GM10248 (cell line): ENCODE measurements at regions of chr14 and their contacts with region 1.

Region 1: GRCh38 chr14:22556990-22557623 is 31.9 kb downstream of the DAD1 start:
- DNase-seq: peak; percentile 77
- CTCF ChIP-seq: peak; percentile 92

Region 2: GRCh38 chr14:22478670-22479069 is 78.4 kb before region 1 on chr14:
- CTCF ChIA-PET with region 1: interaction called, 22 read pairs
- POLR2A ChIA-PET with region 1: interaction called, 4 read pairs
- DNase-seq: no peak
- CTCF ChIP-seq: no peak

Region 3: GRCh38 chr14:22512106-22512814 is 44.8 kb before region 1 on chr14:
- CTCF ChIA-PET with region 1: interaction called, 22 read pairs
- POLR2A ChIA-PET with region 1: interaction called, 3 read pairs
- DNase-seq: no peak
- CTCF ChIP-seq: no peak

Region 4: GRCh38 chr14:22536853-22537338 is 20.2 kb before region 1 on chr14:
- CTCF ChIA-PET with region 1: interaction called, 30 read pairs
- POLR2A ChIA-PET with region 1: interaction called, 3 read pairs
- DNase-seq: peak; percentile 77
- CTCF ChIP-seq: no peak

Region 5: GRCh38 chr14:22653012-22653621 is 96.0 kb after region 1 on chr14:
- CTCF ChIA-PET with region 1: interaction called, 22 read pairs
- POLR2A ChIA-PET with region 1: no interaction called
- DNase-seq: peak; percentile 68
- CTCF ChIP-seq: peak; percentile 81